ENCODE measurements at regions of chr3 and their contacts with region 1.

Region 1: GRCh38 chr3:32374788-32375595 is 16.7 kb upstream of the CMTM7 start:
- DNase-seq: peak; percentile 77
- H3K4me3 Mint-ChIP-seq: no peak overlapping the region
- H3K27ac Mint-ChIP-seq: peak overlapping the region; percentile 34
- H3K4me1 Mint-ChIP-seq: peaks cover 35% of the 10 kb centered on the region
- H3K27me3 Mint-ChIP-seq: no peaks in the 10 kb centered on the region

Region 2: GRCh38 chr3:32391643-32392535 is 16.9 kb after region 1 on chr3 and contains the start of gene CMTM7:
- CTCF ChIA-PET with region 1: interaction called, 50 read pairs
- DNase-seq: peak; percentile 80
- H3K4me3 Mint-ChIP-seq: peak within 1 kb of the TSS; percentile 86
- H3K27ac Mint-ChIP-seq: peak within 1 kb of the TSS; percentile 89
- H3K4me1 Mint-ChIP-seq: peaks cover 57% of the 10 kb centered on the region
- H3K27me3 Mint-ChIP-seq: no peaks in the 10 kb centered on the region

Region 3: DNA sequence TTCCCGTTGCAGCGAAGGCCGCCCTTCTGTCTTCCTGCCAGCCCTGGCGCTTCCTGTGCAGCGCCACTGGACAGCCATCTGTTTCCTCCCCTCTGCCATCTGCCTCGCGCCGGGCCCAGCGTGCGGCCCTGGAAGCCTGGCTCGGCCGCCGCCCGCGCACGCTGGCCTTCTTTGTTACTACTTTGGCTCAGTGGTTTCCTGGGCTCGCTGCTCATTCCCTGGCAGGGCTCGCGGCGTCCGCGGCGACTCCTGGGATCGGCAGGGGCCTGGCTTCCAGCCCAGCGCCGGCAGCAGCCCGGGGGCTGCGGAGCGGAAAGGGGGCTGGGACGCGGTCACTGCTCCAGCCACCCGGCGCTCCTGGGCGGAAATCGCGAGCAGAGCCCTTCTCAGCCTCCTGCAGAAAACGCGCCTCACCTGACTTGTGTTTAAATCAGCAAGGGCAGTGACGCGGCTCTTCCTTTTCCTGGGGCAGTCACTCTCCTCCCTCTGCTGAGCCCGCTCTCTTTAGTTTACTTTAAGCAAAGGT is 26.6 kb after region 1 on chr3:
- CTCF ChIA-PET with region 1: interaction called, 50 read pairs
- DNase-seq: peak; percentile 83
- H3K4me3 Mint-ChIP-seq: peak overlapping the region; percentile 79
- H3K27ac Mint-ChIP-seq: peak overlapping the region; percentile 97
- H3K4me1 Mint-ChIP-seq: peaks cover 79% of the 10 kb centered on the region
- H3K27me3 Mint-ChIP-seq: no peaks in the 10 kb centered on the region

Region 4: DNA sequence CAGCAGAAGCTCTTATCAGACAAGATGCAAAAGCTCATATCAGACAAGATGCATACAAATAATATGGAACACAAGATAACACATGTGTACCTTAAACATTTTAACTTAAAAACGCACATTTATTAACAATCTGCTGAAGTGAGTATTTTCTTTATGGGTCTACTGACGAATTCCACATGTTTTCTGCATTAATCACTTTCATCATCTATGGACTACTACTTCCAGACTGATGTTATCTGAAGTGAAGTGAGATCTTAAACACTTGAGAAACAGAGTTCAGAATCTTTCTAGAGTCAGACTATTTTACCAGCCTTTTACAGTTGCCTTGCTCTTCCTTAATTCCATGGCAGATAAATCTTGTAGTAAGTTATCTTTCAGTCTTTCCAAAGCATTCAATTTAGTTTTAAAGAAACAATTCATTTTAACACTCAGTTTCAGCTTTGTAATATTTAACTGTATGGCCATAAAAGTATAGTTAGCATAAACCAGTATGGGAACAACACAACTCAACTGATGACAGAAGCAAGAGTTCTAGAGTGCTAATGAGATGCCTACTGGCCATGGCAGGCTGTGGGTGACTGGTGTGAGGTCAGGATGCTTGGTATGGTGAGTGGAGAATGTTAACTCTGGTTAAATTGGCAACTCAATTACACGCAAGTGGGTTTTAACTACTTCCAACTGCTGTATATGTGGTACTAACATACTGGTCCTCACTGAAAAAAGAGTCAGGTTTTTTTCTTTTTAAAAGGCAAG is 117.9 kb after region 1 on chr3:
- CTCF ChIA-PET with region 1: no interaction called
- DNase-seq: no peak
- H3K4me3 Mint-ChIP-seq: no peak overlapping the region
- H3K27ac Mint-ChIP-seq: no peak overlapping the region
- H3K4me1 Mint-ChIP-seq: peaks cover 9% of the 10 kb centered on the region
- H3K27me3 Mint-ChIP-seq: no peaks in the 10 kb centered on the region